ENCODE measurements at regions of chr2 and their contacts with region 1.

Region 1: DNA sequence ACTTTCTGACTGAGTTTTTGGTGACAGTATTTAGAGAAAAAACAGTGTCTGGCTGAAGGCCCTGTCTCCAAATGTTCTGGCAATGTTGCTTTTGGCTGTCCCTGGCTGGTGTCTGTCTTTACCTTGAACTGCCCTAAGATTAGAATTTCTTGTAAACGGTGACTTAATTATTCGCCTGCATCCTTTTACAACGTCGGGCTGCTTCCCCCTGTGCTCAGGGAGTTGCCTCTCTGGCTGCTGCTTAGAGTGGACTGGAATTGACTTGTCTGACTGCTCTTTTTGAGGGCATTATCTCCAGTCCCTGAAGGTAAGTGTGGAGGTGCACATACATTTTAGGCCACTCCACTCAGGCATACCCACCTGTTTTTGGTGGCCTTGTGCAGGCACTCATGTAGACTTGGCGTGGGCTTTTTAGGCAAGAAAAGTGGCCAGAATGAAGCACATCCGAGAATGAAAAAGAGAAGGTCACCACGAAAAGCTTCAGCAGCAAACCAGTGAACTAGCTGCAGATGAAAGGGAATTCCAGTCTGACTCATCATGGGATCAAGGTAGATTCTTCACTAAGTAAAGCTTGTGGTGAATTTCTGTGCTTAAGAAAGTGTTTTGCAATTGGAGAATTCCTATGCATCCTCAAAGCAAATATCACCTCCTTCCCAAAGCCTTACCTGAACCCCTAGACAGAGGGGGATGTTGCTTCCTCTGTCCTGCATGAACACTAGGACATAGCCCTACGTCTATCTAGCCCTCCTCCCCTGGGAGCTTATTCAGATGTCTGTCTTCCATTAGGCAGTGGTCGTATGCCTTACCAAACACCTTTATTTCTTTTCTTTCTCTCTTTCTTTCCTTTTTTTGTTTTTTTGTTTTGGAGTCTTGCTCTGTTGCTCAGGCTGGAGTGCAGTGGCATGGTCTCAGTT is 230.3 kb upstream of the TRIB2 start:
- DNase-seq: no peak
- ATAC-seq: peak; percentile 66
- H3K4me3 ChIP-seq: no peak overlapping the region
- H3K27ac ChIP-seq: peak overlapping the region in 1 of 2 donors; percentile 70
- H3K4me1 ChIP-seq: peaks cover 0 to 6% of the 10 kb centered on the region in 2 donors
- H3K27me3 ChIP-seq: no peaks in the 10 kb centered on the region

Region 2: DNA sequence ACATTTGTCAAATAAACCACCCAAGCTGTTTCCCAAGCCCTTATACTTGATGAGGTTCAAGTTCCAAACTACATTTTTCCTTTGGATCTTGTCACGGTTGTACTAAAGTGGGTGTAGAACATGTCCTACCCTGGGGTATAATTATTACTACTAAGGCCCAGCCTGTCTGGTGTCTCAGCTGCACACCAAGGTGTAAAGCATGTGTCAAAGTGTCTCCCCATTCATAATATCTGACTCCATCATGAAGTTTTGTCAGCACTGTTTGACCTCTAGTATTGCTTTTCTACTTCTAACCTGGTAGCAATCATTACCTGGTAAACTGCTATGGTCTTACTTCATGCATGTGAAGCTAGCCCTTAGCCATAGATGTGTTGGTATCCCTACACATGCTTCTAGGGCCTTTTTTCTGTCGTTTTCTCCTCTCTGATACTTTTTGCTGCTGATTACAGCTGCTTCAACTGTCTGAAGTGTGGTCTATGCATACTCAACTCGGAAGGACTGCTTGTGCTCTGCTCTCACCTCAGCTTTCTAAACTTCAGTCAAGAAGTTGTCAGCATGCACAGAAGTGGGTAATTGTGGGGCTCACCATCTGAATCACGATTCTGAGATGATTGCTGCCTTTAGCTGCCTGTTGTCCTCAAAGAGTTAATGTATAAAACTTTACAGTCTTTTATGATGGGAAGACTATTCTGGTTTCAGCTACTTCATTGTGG is 215.4 kb before region 1 on chr2:
- intact Hi-C with region 1: no loop called
- DNase-seq: no peak
- ATAC-seq: no peak
- H3K4me3 ChIP-seq: no peak overlapping the region
- H3K27ac ChIP-seq: no peak overlapping the region
- H3K4me1 ChIP-seq: no peaks in the 10 kb centered on the region
- H3K27me3 ChIP-seq: no peaks in the 10 kb centered on the region

Region 3: GRCh38 chr2:12456293-12457151 is 29.9 kb before region 1 on chr2:
- intact Hi-C with region 1: no loop called
- DNase-seq: peak; percentile 88 to 94
- ATAC-seq: peak; percentile 92
- H3K4me3 ChIP-seq: no peak overlapping the region
- H3K27ac ChIP-seq: no peak overlapping the region
- H3K4me1 ChIP-seq: peaks cover 7 to 10% of the 10 kb centered on the region in 2 donors
- H3K27me3 ChIP-seq: no peaks in the 10 kb centered on the region

Region 4: GRCh38 chr2:12507295-12507694 is 20.8 kb after region 1 on chr2:
- intact Hi-C with region 1: no loop called
- DNase-seq: no peak
- ATAC-seq: peak; percentile 36
- H3K4me3 ChIP-seq: no peak overlapping the region
- H3K27ac ChIP-seq: no peak overlapping the region
- H3K4me1 ChIP-seq: peaks cover 0 to 3% of the 10 kb centered on the region in 2 donors
- H3K27me3 ChIP-seq: no peaks in the 10 kb centered on the region

Region 5: GRCh38 chr2:12534646-12535263 is 48.3 kb after region 1 on chr2:
- intact Hi-C with region 1: loop called in 1 of 2 experiments (anchors 5 kb)
- DNase-seq: peak in 1 of 2 donors; percentile 46
- ATAC-seq: peak; percentile 56
- H3K4me3 ChIP-seq: no peak overlapping the region
- H3K27ac ChIP-seq: peak overlapping the region; percentile 11 to 71
- H3K4me1 ChIP-seq: peaks cover 6 to 11% of the 10 kb centered on the region in 2 donors
- H3K27me3 ChIP-seq: no peaks in the 10 kb centered on the region

Measured in aorta (tissue), 5 donors.